Tibial artery (tissue), 4 donors: ENCODE measurements at regions of chr3 and their contacts with region 1.

Region 1: DNA sequence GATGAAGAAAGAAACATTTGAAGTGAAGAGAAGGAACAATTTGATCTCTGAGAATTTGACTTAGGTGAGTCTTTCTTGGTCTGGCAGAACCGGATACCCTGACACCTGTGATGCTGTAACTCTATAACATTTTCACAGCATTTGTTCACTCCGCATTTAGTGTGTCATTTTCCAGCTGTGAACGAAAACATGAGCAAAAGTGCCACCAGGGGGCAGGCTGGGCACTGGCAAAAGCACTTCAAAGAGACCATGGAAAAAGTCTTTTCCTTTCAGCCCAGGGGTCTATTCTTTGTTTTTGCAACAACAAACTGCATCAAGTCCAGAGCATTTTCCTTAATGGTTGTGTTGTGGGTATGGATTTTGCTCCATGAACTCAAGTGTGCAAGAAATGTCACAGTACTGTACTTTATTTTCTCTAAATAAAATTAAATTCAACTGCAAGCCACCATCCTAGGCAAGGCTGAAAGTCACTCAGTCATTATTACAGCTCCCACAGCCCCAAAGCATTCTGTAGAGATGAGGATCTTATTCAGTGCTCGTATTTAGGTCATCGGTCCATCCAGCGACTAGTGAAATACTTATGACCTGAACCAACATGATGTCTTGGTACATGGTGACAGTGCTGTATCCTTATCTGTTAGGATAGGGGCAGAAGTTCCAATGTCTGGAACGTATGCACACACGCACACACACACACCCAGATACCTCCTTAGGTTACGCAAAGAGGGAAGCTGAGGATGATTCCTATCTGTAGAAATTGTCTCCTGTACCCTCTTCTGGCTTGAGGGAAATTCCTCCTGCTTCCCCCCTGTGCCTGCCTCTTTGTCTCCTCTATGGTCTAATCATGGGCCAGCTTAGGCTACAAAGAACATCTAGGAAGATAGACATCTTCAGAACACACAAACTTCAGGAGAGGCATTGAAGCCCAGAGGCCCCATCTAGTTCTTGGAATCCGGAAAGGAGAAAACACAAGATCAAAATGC is 125.5 kb downstream of the GADL1 start:
- DNase-seq: peak; percentile 75 to 79
- H3K4me3 ChIP-seq: no peak overlapping the region
- H3K27ac ChIP-seq: no peak overlapping the region
- H3K4me1 ChIP-seq: no peaks in the 10 kb centered on the region
- H3K27me3 ChIP-seq: no peaks in the 10 kb centered on the region
- CTCF ChIP-seq: peak; percentile 81

Region 2: DNA sequence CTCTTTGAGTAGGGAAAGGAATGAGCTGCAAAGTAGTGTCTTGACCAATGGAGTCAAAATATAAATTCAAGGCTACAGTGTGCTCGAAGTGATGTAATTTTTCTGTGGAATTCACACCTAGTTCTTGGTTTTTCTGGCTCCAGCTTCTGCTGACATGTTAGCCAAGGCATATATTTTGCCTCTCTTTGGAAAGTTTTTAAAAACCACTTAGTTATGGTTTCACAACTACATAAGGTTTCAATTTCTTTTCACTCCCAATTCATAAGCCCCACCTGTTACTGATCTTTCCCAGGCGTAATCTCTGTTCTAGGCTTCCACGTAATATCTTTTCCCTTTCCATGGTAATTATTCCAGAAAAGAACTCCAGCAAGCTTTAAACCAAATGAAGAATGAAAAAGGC is 78.6 kb after region 1 on chr3:
- intact Hi-C with region 1: no loop called
- DNase-seq: no peak
- H3K4me3 ChIP-seq: no peak overlapping the region
- H3K27ac ChIP-seq: no peak overlapping the region
- H3K4me1 ChIP-seq: no peaks in the 10 kb centered on the region
- H3K27me3 ChIP-seq: no peaks in the 10 kb centered on the region
- CTCF ChIP-seq: no peak

Region 3: GRCh38 chr3:31132132-31132769 is 363.3 kb after region 1 on chr3:
- intact Hi-C with region 1: loop called (anchors 10 kb)
- DNase-seq: no peak
- H3K4me3 ChIP-seq: no peak overlapping the region
- H3K27ac ChIP-seq: no peak overlapping the region
- H3K4me1 ChIP-seq: no peaks in the 10 kb centered on the region
- H3K27me3 ChIP-seq: no peaks in the 10 kb centered on the region
- CTCF ChIP-seq: peak; percentile 48